Naive thymus-derived CD8-positive, alpha-beta T cell (primary cell): ENCODE measurements at regions of chr15 and their contacts with region 1.

Region 1: GRCh38 chr15:88638626-88639372 is at the start of gene ISG20:
- DNase-seq: peak; percentile 90 to 99 (median 98)
- ATAC-seq: peak; percentile 81 to 82
- H3K4me3 Mint-ChIP-seq: peak within 1 kb of the TSS; percentile 84 to 99 (median 94)
- H3K27ac Mint-ChIP-seq: peak within 1 kb of the TSS; percentile 93 to 100 (median 100)
- H3K4me1 Mint-ChIP-seq: peaks cover 42 to 87% (median 75%) of the 10 kb centered on the region in 4 donors
- H3K27me3 Mint-ChIP-seq: no peaks in the 10 kb centered on the region
- polyA plus RNA-seq, gene ISG20: 422 to 562 (median 537) TPM

Region 2: GRCh38 chr15:88467073-88467934 is 171.5 kb before region 1 on chr15 and contains the starts of genes MRPL46 and MRPS11:
- POLR2A ChIA-PET with region 1: interaction called, 12 read pairs
- DNase-seq: peak; percentile 77 to 95 (median 88)
- ATAC-seq: peak; percentile 93 to 94
- H3K4me3 Mint-ChIP-seq: peak within 1 kb of the TSS; percentile 93 to 99 (median 96)
- H3K27ac Mint-ChIP-seq: peak within 1 kb of the TSS; percentile 92 to 100 (median 99)
- H3K4me1 Mint-ChIP-seq: peaks cover 16 to 35% (median 26%) of the 10 kb centered on the region in 4 donors
- H3K27me3 Mint-ChIP-seq: no peaks in the 10 kb centered on the region
- polyA plus RNA-seq, gene MRPL46: 41.6 to 61.6 (median 57.2) TPM
- polyA plus RNA-seq, gene MRPS11: 59.0 to 71.8 (median 67.1) TPM

Region 3: GRCh38 chr15:88628018-88628892 is 10.5 kb before region 1 on chr15:
- POLR2A ChIA-PET with region 1: no interaction called
- DNase-seq: no peak
- ATAC-seq: no peak
- H3K4me3 Mint-ChIP-seq: peak overlapping the region; percentile 42 to 88 (median 68)
- H3K27ac Mint-ChIP-seq: peak overlapping the region; percentile 90 to 100 (median 97)
- H3K4me1 Mint-ChIP-seq: peaks cover 37 to 95% (median 88%) of the 10 kb centered on the region in 4 donors
- H3K27me3 Mint-ChIP-seq: no peaks in the 10 kb centered on the region

Region 4: DNA sequence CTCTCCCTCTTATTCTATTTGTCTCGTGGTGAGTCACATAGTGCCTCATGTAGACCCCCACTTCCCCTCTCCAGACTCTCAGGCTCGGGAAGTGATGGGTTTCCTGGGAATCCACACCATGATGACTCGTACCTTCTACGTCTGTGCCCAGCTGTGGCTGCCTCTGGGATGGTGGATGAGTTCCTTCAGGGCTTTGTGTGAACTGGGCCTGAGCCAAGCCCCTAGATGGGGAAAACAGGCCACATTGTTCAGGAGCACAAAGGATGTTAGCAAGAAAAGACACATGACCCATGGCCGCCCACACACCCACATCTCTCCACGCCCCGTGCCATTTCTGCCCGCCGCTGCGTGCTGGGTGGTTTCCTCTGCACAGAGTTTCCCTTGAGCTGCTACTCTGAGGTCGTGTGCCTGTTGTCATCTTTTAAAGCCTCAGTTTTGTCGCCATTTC is 10.5 kb after region 1 on chr15:
- POLR2A ChIA-PET with region 1: interaction called, 80 read pairs
- DNase-seq: peak; percentile 40 to 85 (median 66)
- ATAC-seq: peak; percentile 91 to 94
- H3K4me3 Mint-ChIP-seq: peak overlapping the region; percentile 59 to 97 (median 82)
- H3K27ac Mint-ChIP-seq: peak overlapping the region; percentile 92 to 100 (median 98)
- H3K4me1 Mint-ChIP-seq: peaks cover 51 to 96% (median 94%) of the 10 kb centered on the region in 4 donors
- H3K27me3 Mint-ChIP-seq: no peaks in the 10 kb centered on the region

Region 5: GRCh38 chr15:88681610-88682221 is 42.9 kb after region 1 on chr15:
- POLR2A ChIA-PET with region 1: no interaction called
- DNase-seq: no peak
- ATAC-seq: no peak
- H3K4me3 Mint-ChIP-seq: no peak overlapping the region
- H3K27ac Mint-ChIP-seq: no peak overlapping the region
- H3K4me1 Mint-ChIP-seq: peaks cover 0 to 2% (median 0%) of the 10 kb centered on the region in 4 donors
- H3K27me3 Mint-ChIP-seq: peaks cover 4 to 12% (median 9%) of the 10 kb centered on the region in 5 donors